ENCODE measurements at regions of chr1 and their contacts with region 1.

Region 1: GRCh38 chr1:224542783-224543440 is 73.2 kb upstream of the CNIH3 start:
- DNase-seq: peak; percentile 96
- H3K4me3 ChIP-seq: peak overlapping the region in 1 of 3 experiments; percentile 31
- H3K27ac ChIP-seq: peak overlapping the region; percentile 100
- H3K4me1 ChIP-seq: peaks cover 53% of the 10 kb centered on the region
- H3K27me3 ChIP-seq: no peaks in the 10 kb centered on the region
- CTCF ChIP-seq: no peak
- POLR2A ChIP-seq: peak; percentile 11

Region 2: GRCh38 chr1:223845810-223846682 is 696.9 kb before region 1 on chr1 and contains the start of gene TP53BP2:
- CTCF ChIA-PET with region 1: no interaction called
- POLR2A ChIA-PET with region 1: no interaction called
- dilution Hi-C with region 1: no loop called
- intact Hi-C with region 1: loop called (anchors 10 kb)
- DNase-seq: peak; percentile 92
- H3K4me3 ChIP-seq: peak within 1 kb of the TSS; percentile 79 to 82 (median 81)
- H3K27ac ChIP-seq: peak within 1 kb of the TSS; percentile 99
- H3K4me1 ChIP-seq: peaks cover 18% of the 10 kb centered on the region
- H3K27me3 ChIP-seq: no peaks in the 10 kb centered on the region
- CTCF ChIP-seq: peak; percentile 58 to 84
- POLR2A ChIP-seq: peak; percentile 54
- total RNA-seq, gene TP53BP2: 43.2 and 51.9 TPM in 2 replicates

Region 3: GRCh38 chr1:224447251-224447650 is 95.7 kb before region 1 on chr1:
- CTCF ChIA-PET with region 1: no interaction called
- POLR2A ChIA-PET with region 1: no interaction called
- dilution Hi-C with region 1: no loop called
- intact Hi-C with region 1: no loop called
- DNase-seq: peak; percentile 86
- H3K4me3 ChIP-seq: no peak overlapping the region
- H3K27ac ChIP-seq: peak overlapping the region; percentile 32
- H3K4me1 ChIP-seq: peaks cover 11% of the 10 kb centered on the region
- H3K27me3 ChIP-seq: no peaks in the 10 kb centered on the region
- CTCF ChIP-seq: no peak
- POLR2A ChIP-seq: no peak

Region 4: GRCh38 chr1:224497714-224498573 is 45.0 kb before region 1 on chr1:
- CTCF ChIA-PET with region 1: interaction called, 6 read pairs
- POLR2A ChIA-PET with region 1: interaction called, 3 read pairs
- dilution Hi-C with region 1: no loop called
- intact Hi-C with region 1: loop called (anchors 1 kb)
- DNase-seq: peak; percentile 89
- H3K4me3 ChIP-seq: peak overlapping the region in 1 of 3 experiments; percentile 20
- H3K27ac ChIP-seq: peak overlapping the region; percentile 94
- H3K4me1 ChIP-seq: peaks cover 30% of the 10 kb centered on the region
- H3K27me3 ChIP-seq: no peaks in the 10 kb centered on the region
- CTCF ChIP-seq: no peak
- POLR2A ChIP-seq: no peak

Region 5: DNA sequence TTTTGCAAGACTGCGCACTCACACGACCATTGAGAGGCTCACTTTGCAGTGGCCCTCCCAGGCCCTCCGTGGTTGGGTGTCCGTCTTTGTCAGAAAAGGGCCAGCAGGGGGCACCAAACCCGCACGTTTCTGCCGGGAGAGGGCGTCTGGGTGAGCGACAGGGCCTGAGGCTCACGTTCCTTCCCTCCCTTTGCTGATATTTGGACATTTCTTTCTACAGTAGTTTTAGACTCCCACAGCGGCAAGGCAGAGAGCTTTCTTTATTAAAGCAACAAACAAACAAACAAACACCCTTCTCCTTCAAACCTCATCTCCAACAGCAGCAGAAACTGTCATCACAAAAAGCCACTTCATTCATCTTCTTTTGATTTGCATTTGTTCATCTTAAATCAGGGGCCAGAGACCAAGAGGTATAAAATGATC is 29.1 kb before region 1 on chr1:
- CTCF ChIA-PET with region 1: interaction called, 15 read pairs
- POLR2A ChIA-PET with region 1: no interaction called
- dilution Hi-C with region 1: no loop called
- intact Hi-C with region 1: loop called (anchors 1 kb)
- DNase-seq: peak; percentile 77
- H3K4me3 ChIP-seq: no peak overlapping the region
- H3K27ac ChIP-seq: no peak overlapping the region
- H3K4me1 ChIP-seq: no peaks in the 10 kb centered on the region
- H3K27me3 ChIP-seq: no peaks in the 10 kb centered on the region
- CTCF ChIP-seq: peak; percentile 87 to 92
- POLR2A ChIP-seq: no peak

Region 6: GRCh38 chr1:224623743-224624333 is 80.9 kb after region 1 on chr1:
- CTCF ChIA-PET with region 1: interaction called, 3 read pairs
- POLR2A ChIA-PET with region 1: no interaction called
- dilution Hi-C with region 1: no loop called
- intact Hi-C with region 1: loop called (anchors 1 kb)
- DNase-seq: peak; percentile 51
- H3K4me3 ChIP-seq: no peak overlapping the region
- H3K27ac ChIP-seq: peak overlapping the region; percentile 50
- H3K4me1 ChIP-seq: peaks cover 20% of the 10 kb centered on the region
- H3K27me3 ChIP-seq: peaks cover 11 to 17% of the 10 kb centered on the region in 2 experiments
- CTCF ChIP-seq: no peak
- POLR2A ChIP-seq: no peak